HepG2 (cell line): ENCODE measurements at regions of chr18 and their contacts with region 1.

Region 1: DNA sequence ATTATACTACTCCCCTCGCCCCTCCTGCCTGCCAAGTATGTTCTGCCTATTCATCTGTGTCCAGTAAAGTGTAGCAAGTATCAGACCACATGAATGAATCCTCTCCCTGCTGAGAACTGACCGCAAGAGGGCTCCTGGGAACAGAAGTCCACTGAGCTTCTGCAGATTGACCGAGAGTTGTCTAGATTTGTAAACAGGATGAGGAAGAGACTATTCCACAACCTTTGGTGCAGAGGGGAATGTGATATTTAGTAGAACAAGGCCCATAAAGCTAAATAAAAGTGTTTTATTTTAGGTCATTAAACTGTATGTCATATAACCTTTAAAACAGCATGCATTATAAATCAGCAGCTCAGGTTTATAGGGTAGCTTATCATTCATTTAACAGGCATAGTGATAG is 377.0 kb downstream of the DCC start:
- DNase-seq: peak; percentile 27
- ATAC-seq: peak; percentile 79
- H3K4me3 ChIP-seq: no peak overlapping the region
- H3K27ac ChIP-seq: no peak overlapping the region
- H3K4me1 ChIP-seq: no peaks in the 10 kb centered on the region
- H3K27me3 ChIP-seq: no peaks in the 10 kb centered on the region
- CTCF ChIP-seq: peak; percentile 49
- EP300 ChIP-seq: no peak
- POLR2A ChIP-seq: no peak
- RAD21 ChIP-seq: no peak

Region 2: GRCh38 chr18:52903857-52904256 is 186.9 kb after region 1 on chr18:
- CTCF ChIA-PET with region 1: no interaction called
- POLR2A ChIA-PET with region 1: no interaction called
- in situ Hi-C with region 1: no loop called
- intact Hi-C with region 1: loop called (anchors 1 kb)
- DNase-seq: peak; percentile 11
- ATAC-seq: peak; percentile 55
- H3K4me3 ChIP-seq: no peak overlapping the region
- H3K27ac ChIP-seq: no peak overlapping the region
- H3K4me1 ChIP-seq: no peaks in the 10 kb centered on the region
- H3K27me3 ChIP-seq: no peaks in the 10 kb centered on the region
- CTCF ChIP-seq: peak; percentile 38; the same call in 1 of the 2 replicates
- EP300 ChIP-seq: no peak
- POLR2A ChIP-seq: no peak
- RAD21 ChIP-seq: no peak

Region 3: DNA sequence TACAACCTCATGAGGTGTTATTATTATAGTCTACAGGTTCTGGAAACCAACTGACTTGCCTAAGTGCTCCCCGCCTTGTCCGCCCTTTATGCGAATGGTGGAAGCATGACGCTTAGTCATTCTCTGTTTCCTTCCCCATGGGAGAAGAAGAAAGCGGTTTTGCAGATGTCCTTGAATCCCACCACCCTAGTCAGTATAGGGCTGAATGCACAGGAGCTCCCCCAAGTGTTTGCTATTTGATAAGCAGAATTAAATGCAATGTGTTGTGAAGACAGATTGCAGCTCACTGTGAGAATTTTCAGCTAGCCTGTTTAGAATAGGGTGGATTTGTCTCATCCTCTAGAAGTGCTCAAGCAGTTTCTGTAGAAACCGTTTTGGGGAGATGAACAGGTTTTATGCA is 275.1 kb after region 1 on chr18:
- CTCF ChIA-PET with region 1: no interaction called
- POLR2A ChIA-PET with region 1: no interaction called
- in situ Hi-C with region 1: no loop called
- intact Hi-C with region 1: loop called (anchors 10 kb)
- DNase-seq: peak; percentile 0
- ATAC-seq: no peak
- H3K4me3 ChIP-seq: no peak overlapping the region
- H3K27ac ChIP-seq: no peak overlapping the region
- H3K4me1 ChIP-seq: no peaks in the 10 kb centered on the region
- H3K27me3 ChIP-seq: no peaks in the 10 kb centered on the region
- CTCF ChIP-seq: 0 out of 2 replicates have a peak, but pooled peaks have one; percentile 9
- EP300 ChIP-seq: no peak
- POLR2A ChIP-seq: no peak
- RAD21 ChIP-seq: no peak

Region 4: GRCh38 chr18:53380063-53380639 is 663.2 kb after region 1 on chr18:
- CTCF ChIA-PET with region 1: no interaction called
- POLR2A ChIA-PET with region 1: no interaction called
- in situ Hi-C with region 1: loop called (anchors 25 kb)
- intact Hi-C with region 1: no loop called
- DNase-seq: peak; percentile 7
- ATAC-seq: peak; percentile 60; the same call in 2 of the 3 replicates
- H3K4me3 ChIP-seq: no peak overlapping the region
- H3K27ac ChIP-seq: no peak overlapping the region
- H3K4me1 ChIP-seq: no peaks in the 10 kb centered on the region
- H3K27me3 ChIP-seq: no peaks in the 10 kb centered on the region; a peak in 1 of 5 replicates
- CTCF ChIP-seq: peak; percentile 53
- EP300 ChIP-seq: no peak
- POLR2A ChIP-seq: no peak
- RAD21 ChIP-seq: no peak